ENCODE measurements at regions of chr3 and their contacts with region 1.

Region 1: DNA sequence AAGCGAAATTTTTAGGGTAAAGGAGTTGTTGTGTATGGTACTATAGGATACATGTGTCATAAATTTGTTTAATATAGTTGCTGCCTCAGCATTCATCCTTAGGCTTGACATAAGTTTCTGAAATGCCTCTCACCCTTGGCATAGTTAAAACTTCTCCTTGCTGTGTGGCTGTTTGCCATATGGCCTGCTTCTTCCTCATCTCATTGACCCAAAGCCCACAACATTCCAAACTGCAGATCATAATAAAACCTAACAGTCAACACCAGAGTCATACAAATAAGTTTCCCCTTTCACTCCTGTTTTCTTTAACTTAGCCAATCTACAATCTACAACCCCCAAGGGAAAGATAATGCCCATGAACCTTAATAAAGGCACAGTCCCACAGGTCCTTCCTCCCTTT is 136.6 kb downstream of the TMCC1 start:
- DNase-seq: no peak
- H3K4me3 ChIP-seq: no peak overlapping the region
- H3K4me3 Mint-ChIP-seq: no peak overlapping the region
- H3K27ac ChIP-seq: no peak overlapping the region
- H3K27ac Mint-ChIP-seq: peak overlapping the region in 3 of 8 donors; percentile 1 to 7 (median 4)
- H3K4me1 ChIP-seq: no peaks in the 10 kb centered on the region
- H3K4me1 Mint-ChIP-seq: peaks cover 0 to 10% (median 9%) of the 10 kb centered on the region in 3 donors
- H3K27me3 ChIP-seq: no peaks in the 10 kb centered on the region
- H3K27me3 Mint-ChIP-seq: no peaks in the 10 kb centered on the region

Region 2: GRCh38 chr3:129101370-129102138 is 655.3 kb before region 1 on chr3:
- CTCF ChIA-PET with region 1: no interaction called
- POLR2A ChIA-PET with region 1: interaction called, 12 read pairs
- DNase-seq: no peak
- H3K4me3 ChIP-seq: no peak overlapping the region
- H3K4me3 Mint-ChIP-seq: peak overlapping the region in 1 of 7 donors; percentile 15
- H3K27ac ChIP-seq: no peak overlapping the region
- H3K27ac Mint-ChIP-seq: peak overlapping the region in 7 of 8 donors; percentile 49 to 83 (median 72)
- H3K4me1 ChIP-seq: peaks cover 62% of the 10 kb centered on the region
- H3K4me1 Mint-ChIP-seq: peaks cover 53 to 78% (median 67%) of the 10 kb centered on the region in 3 donors
- H3K27me3 ChIP-seq: no peaks in the 10 kb centered on the region
- H3K27me3 Mint-ChIP-seq: peaks cover 0 to 3% of the 10 kb centered on the region in 2 donors